CD14-positive monocyte (primary cell): ENCODE measurements at regions of chr1 and their contacts with region 1.

Region 1: GRCh38 chr1:245258271-245258920 is 103.6 kb downstream of the KIF26B start:
- DNase-seq: peak; percentile 55 to 84 (median 69)
- H3K4me3 ChIP-seq: no peak overlapping the region
- H3K4me3 Mint-ChIP-seq: peak overlapping the region in 1 of 2 donors; percentile 83
- H3K27ac ChIP-seq: no peak overlapping the region
- H3K27ac Mint-ChIP-seq: peak overlapping the region in 1 of 7 donors; percentile 31
- H3K4me1 ChIP-seq: peaks cover 16 to 24% of the 10 kb centered on the region in 2 donors
- H3K4me1 Mint-ChIP-seq: peaks cover 28% of the 10 kb centered on the region
- H3K27me3 ChIP-seq: peaks cover 78 to 96% of the 10 kb centered on the region in 2 donors
- H3K27me3 Mint-ChIP-seq: peaks cover 91 to 93% (median 93%) of the 10 kb centered on the region in 3 donors
- CTCF ChIP-seq: no peak

Region 2: DNA sequence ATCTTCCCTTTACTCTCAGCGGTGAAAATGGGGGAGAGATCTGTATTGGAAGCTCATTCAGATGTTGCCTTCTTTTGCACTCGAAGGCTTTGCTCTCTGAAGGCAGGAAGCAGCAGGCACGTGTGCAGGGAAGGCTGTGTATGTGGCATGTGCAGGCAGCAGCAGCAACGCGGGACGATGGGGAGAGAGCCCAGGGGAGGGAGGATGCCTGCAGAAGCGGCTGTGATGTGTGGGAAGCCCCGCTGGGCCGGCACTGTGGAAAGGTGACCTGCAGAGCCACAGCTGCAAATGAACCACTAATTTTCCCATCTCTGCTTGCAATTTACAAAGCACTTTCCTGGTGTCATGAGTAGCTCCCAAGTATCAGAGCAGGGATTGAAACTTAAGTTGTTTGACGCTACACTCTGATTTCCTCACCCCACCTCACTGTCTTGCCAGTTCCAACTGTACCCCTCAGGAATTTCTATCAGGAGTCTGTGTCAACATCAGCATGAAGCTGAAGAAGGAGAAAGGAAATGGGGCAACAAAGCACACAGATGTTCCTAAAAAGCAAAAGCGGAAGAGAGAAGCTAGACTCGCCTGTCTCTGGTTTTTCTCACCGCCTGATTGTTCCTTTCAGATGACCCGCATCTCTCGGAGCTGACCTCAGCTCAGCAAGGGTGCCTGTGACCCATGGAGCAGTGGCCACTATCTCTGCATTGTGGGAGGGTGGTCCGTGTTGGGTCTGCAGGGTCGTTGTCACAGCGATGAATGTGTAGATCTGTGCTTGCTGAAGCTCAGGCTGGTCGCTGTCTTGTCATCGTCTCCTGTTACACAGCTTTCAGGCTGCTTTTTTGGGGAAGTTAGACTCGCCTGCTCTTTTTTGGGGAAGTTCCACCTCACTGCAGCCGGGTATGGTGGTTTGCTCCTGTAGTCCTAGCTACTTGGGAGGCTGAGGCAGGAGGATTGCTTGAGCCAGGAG is 52.5 kb after region 1 on chr1:
- intact Hi-C with region 1: loop called in 1 of 2 experiments (anchors 5 kb)
- DNase-seq: peak; percentile 82 to 92 (median 87)
- H3K4me3 ChIP-seq: peak overlapping the region; percentile 37 to 73 (median 40)
- H3K4me3 Mint-ChIP-seq: peak overlapping the region; percentile 81 to 93
- H3K27ac ChIP-seq: peak overlapping the region; percentile 80 to 88
- H3K27ac Mint-ChIP-seq: peak overlapping the region; percentile 89 to 97 (median 94)
- H3K4me1 ChIP-seq: peaks cover 12 to 24% of the 10 kb centered on the region in 2 donors
- H3K4me1 Mint-ChIP-seq: peaks cover 28% of the 10 kb centered on the region
- H3K27me3 ChIP-seq: peaks cover 14 to 18% of the 10 kb centered on the region in 2 donors
- H3K27me3 Mint-ChIP-seq: peaks cover 23 to 60% (median 32%) of the 10 kb centered on the region in 3 donors
- CTCF ChIP-seq: no peak

Region 3: DNA sequence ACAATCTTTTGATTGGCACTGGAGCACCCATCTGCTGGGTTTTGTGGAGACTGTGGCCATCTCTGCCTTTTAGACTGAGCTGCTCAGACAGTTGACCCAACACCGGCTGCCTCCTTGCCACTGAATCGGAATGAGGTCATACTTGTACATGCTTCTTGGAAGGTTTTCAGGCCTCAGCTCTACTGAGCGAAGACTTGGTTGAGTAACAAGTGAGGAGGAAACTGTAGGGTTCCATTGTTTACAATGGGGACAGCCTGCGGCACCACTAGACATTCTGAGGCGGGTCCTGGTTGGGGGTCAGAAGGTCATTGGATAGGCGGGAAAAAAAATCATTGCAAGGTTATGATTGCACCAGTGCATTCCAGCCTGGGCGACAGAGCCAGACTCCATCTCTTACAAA is 216.8 kb after region 1 on chr1:
- intact Hi-C with region 1: no loop called
- DNase-seq: no peak
- H3K4me3 ChIP-seq: no peak overlapping the region
- H3K4me3 Mint-ChIP-seq: no peak overlapping the region
- H3K27ac ChIP-seq: no peak overlapping the region
- H3K27ac Mint-ChIP-seq: no peak overlapping the region
- H3K4me1 ChIP-seq: peaks cover 16 to 33% of the 10 kb centered on the region in 2 donors
- H3K4me1 Mint-ChIP-seq: peaks cover 33% of the 10 kb centered on the region
- H3K27me3 ChIP-seq: no peaks in the 10 kb centered on the region
- H3K27me3 Mint-ChIP-seq: peaks cover 1 to 8% (median 5%) of the 10 kb centered on the region in 3 donors
- CTCF ChIP-seq: no peak